Naive thymus-derived CD8-positive, alpha-beta T cell (primary cell): ENCODE measurements at regions of chr7 and their contacts with region 1.

Region 1: GRCh38 chr7:148940702-148941597 is 56.9 kb upstream of the EZH2 start:
- DNase-seq: peak; percentile 42 to 89 (median 61)
- ATAC-seq: peak; percentile 65 to 76
- H3K4me3 Mint-ChIP-seq: peak overlapping the region; percentile 93 to 99 (median 97)
- H3K27ac Mint-ChIP-seq: peak overlapping the region; percentile 97 to 99 (median 98)
- H3K4me1 Mint-ChIP-seq: peaks cover 8 to 21% (median 15%) of the 10 kb centered on the region in 4 donors
- H3K27me3 Mint-ChIP-seq: no peaks in the 10 kb centered on the region

Region 2: GRCh38 chr7:148698397-148699023 is 242.4 kb before region 1 on chr7 and contains the start of gene CUL1:
- POLR2A ChIA-PET with region 1: interaction called, 13 read pairs
- DNase-seq: peak; percentile 74 to 90 (median 79)
- ATAC-seq: peak; percentile 75 to 79
- H3K4me3 Mint-ChIP-seq: peak within 1 kb of the TSS; percentile 87 to 97 (median 92)
- H3K27ac Mint-ChIP-seq: peak within 1 kb of the TSS; percentile 90 to 97 (median 94)
- H3K4me1 Mint-ChIP-seq: peaks cover 35 to 56% (median 51%) of the 10 kb centered on the region in 4 donors
- H3K27me3 Mint-ChIP-seq: no peaks in the 10 kb centered on the region
- polyA plus RNA-seq, gene CUL1: 39.2 to 50.6 (median 39.6) TPM

Region 3: DNA sequence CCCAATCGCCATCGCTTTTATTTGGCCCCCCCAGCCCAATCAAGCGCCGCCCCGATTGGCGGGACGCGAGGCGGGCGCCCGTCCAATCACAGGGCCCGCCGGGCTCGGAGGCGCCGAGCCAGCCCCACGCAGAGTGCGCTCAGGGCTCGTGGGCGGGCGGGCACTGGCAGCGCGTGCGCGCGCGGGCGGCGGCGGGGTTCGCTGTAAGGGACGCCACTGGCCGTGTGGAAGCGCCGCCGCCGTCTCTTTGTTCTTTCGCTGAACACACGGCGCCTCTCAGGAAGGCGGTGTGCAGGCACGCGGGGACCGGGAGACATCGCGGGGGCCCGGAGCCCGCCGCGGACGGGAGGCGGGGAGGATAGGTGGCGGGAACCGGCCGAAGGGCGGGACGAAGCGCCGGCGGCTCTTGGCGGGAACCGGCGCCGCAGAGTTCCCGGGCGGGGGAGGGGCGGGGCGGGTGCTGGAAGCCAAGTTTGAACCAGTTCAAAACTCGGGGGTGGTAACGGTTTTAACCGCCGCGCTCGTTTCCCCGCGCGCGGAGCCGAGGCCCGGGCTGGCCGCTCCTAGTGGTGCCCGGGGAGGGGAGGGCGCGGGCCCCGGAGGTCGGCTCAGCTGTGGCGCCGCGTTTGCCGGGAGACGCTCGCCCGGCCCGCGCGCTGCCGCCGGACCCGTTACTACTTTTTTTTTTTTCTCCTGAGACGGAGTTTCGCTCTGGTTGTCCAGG is 56.5 kb before region 1 on chr7:
- POLR2A ChIA-PET with region 1: interaction called, 25 read pairs
- DNase-seq: peak; percentile 88 to 95 (median 94)
- ATAC-seq: peak; percentile 87 to 89
- H3K4me3 Mint-ChIP-seq: peak overlapping the region; percentile 79 to 95 (median 92)
- H3K27ac Mint-ChIP-seq: peak overlapping the region; percentile 68 to 95 (median 92)
- H3K4me1 Mint-ChIP-seq: peaks cover 8 to 25% (median 16%) of the 10 kb centered on the region in 4 donors
- H3K27me3 Mint-ChIP-seq: no peaks in the 10 kb centered on the region

Region 4: DNA sequence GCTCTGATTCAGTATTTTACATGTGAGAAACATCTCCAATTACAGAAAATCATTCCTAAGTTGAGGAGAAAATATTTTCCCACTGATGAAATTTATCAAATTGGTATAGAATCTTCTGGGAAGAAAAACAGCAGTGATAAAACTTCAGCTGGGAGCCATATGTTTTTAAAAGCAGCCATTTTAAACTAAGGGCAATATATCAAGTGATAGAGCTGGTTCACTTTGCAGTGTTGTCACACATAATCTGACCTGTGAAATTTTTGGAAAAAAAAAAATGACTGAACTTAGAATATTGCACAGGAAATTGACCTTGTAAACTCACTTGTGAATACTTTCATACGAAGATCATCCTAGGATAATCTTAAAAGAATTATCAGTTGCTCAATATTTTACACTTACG is 46.4 kb before region 1 on chr7:
- POLR2A ChIA-PET with region 1: no interaction called
- DNase-seq: no peak
- ATAC-seq: no peak
- H3K4me3 Mint-ChIP-seq: no peak overlapping the region
- H3K27ac Mint-ChIP-seq: no peak overlapping the region
- H3K4me1 Mint-ChIP-seq: peaks cover 3 to 7% (median 7%) of the 10 kb centered on the region in 4 donors
- H3K27me3 Mint-ChIP-seq: peaks cover 0 to 2% (median 0%) of the 10 kb centered on the region in 5 donors

Region 5: GRCh38 chr7:148914208-148914777 is 26.7 kb before region 1 on chr7:
- POLR2A ChIA-PET with region 1: interaction called, 15 read pairs
- DNase-seq: no peak
- ATAC-seq: no peak
- H3K4me3 Mint-ChIP-seq: peak overlapping the region in 7 of 10 donors; percentile 48 to 78 (median 73)
- H3K27ac Mint-ChIP-seq: peak overlapping the region in 9 of 10 donors; percentile 28 to 90 (median 70)
- H3K4me1 Mint-ChIP-seq: peaks cover 21 to 60% (median 48%) of the 10 kb centered on the region in 4 donors
- H3K27me3 Mint-ChIP-seq: no peaks in the 10 kb centered on the region